ENCODE measurements at regions of chr15 and their contacts with region 1.

Region 1: GRCh38 chr15:33201491-33202231 is 7.1 kb upstream of the FMN1 start:
- DNase-seq: peak; percentile 73
- H3K4me3 Mint-ChIP-seq: peak overlapping the region; percentile 68
- H3K27ac Mint-ChIP-seq: peak overlapping the region; percentile 47
- H3K4me1 Mint-ChIP-seq: peaks cover 21% of the 10 kb centered on the region
- H3K27me3 Mint-ChIP-seq: no peaks in the 10 kb centered on the region

Region 2: GRCh38 chr15:33104212-33104611 is 97.4 kb before region 1 on chr15:
- CTCF ChIA-PET with region 1: no interaction called
- intact Hi-C with region 1: loop called (anchors 5 kb)
- DNase-seq: peak; percentile 32
- H3K4me3 Mint-ChIP-seq: no peak overlapping the region
- H3K27ac Mint-ChIP-seq: no peak overlapping the region
- H3K4me1 Mint-ChIP-seq: peaks cover 6% of the 10 kb centered on the region
- H3K27me3 Mint-ChIP-seq: peaks cover 2% of the 10 kb centered on the region

Region 3: GRCh38 chr15:33126559-33127290 is 74.9 kb before region 1 on chr15:
- CTCF ChIA-PET with region 1: no interaction called
- intact Hi-C with region 1: loop called (anchors 2 kb)
- DNase-seq: peak; percentile 77
- H3K4me3 Mint-ChIP-seq: no peak overlapping the region
- H3K27ac Mint-ChIP-seq: no peak overlapping the region
- H3K4me1 Mint-ChIP-seq: peaks cover 17% of the 10 kb centered on the region
- H3K27me3 Mint-ChIP-seq: no peaks in the 10 kb centered on the region

Region 4: GRCh38 chr15:33242669-33243191 is 41.1 kb after region 1 on chr15:
- CTCF ChIA-PET with region 1: no interaction called
- intact Hi-C with region 1: loop called (anchors 1 kb)
- DNase-seq: no peak
- H3K4me3 Mint-ChIP-seq: no peak overlapping the region
- H3K27ac Mint-ChIP-seq: no peak overlapping the region
- H3K4me1 Mint-ChIP-seq: peaks cover 11% of the 10 kb centered on the region
- H3K27me3 Mint-ChIP-seq: no peaks in the 10 kb centered on the region

Region 5: DNA sequence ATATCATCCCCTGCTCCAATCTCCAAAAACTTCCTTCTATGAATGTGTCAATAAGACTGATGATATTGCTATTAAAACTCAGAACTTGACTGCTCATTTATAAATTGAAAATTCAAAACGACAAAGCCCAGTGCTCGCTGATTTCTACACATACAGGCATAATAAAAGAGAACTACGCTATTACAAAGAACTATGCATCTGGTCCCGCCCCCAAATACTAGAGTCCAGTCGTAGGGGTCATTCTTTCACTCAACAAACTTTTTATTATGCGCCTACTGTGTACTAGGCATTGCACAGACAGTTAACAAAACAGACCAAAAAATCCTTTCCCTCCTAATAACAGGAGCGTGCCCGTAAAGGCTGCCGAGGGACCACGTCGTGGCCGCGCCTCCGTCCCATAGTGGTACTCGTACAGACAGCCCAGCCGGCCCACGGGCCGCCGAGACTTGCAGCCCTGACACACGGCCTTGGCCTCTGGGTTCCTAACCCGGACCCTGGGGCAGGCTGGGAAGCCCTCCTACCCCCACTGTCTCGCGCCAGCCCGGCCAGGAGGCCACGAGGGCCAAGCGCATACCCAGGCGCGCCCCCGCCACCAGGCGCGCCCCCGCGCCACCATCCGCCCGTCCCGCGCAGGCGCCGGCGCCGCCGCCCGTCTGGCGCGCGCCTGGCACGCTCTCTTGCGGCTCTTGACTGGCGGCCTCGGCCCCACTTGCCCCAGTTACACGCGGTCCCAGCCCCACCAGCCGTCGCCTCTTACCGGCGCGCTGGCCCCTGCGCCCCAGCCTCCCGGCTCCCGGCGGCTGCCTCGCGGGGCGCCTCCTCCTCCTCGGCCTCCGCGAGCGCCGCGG is 836.6 kb after region 1 on chr15:
- CTCF ChIA-PET with region 1: no interaction called
- intact Hi-C with region 1: loop called (anchors 2 kb)
- DNase-seq: peak; percentile 70
- H3K4me3 Mint-ChIP-seq: peak overlapping the region; percentile 92
- H3K27ac Mint-ChIP-seq: peak overlapping the region; percentile 92
- H3K4me1 Mint-ChIP-seq: peaks cover 17% of the 10 kb centered on the region
- H3K27me3 Mint-ChIP-seq: no peaks in the 10 kb centered on the region